ENCODE measurements at regions of chr15 and their contacts with region 1.

Region 1: DNA sequence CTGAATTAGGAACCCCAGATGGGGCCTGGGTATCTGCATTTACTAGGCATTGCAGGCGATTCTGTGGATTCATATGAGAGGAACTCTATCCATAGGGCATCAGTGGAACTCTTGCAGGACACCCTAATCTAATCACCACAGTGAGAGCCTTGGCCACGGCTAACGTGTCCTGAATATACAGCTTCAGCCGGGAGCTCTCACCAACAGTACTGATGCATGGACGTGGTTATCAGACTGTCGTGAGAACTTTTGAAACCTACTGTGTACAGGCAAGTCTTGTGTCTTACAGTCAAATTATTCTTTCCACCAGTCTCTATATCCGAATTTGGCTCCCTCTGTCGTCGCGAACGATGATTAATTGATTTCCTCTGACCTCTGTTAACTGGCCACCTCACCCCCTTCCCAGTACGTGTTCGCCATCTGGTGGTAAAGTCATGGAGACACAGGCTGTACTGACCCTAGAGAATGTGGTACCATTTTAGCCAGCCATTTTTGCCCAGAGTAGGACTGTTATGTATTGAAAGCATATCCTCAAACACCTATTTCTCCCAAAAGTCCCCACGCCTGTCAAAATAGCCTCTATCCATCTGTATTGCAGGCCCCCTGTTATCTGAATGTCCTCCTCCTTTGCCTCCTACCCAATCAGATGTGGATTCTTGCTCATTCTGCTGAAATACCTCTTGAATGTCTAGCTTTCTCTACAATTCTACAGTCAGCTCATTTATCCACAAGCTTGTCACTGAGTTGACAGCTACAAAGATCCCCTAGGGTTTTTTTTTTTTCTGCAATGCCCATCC is 39.7 kb downstream of the GLDN start:
- DNase-seq: peak; percentile 67
- H3K4me3 ChIP-seq: no peak overlapping the region
- H3K27ac ChIP-seq: no peak overlapping the region
- H3K4me1 ChIP-seq: no peaks in the 10 kb centered on the region
- H3K27me3 ChIP-seq: peaks cover 40 to 59% of the 10 kb centered on the region in 2 experiments
- CTCF ChIP-seq: peak; percentile 82 to 87
- POLR2A ChIP-seq: no peak

Region 2: GRCh38 chr15:51132384-51133139 is 248.6 kb before region 1 on chr15:
- CTCF ChIA-PET with region 1: interaction called, 16 read pairs
- POLR2A ChIA-PET with region 1: no interaction called
- dilution Hi-C with region 1: no loop called
- intact Hi-C with region 1: no loop called
- DNase-seq: peak; percentile 97
- H3K4me3 ChIP-seq: no peak overlapping the region
- H3K27ac ChIP-seq: peak overlapping the region; percentile 91
- H3K4me1 ChIP-seq: peaks cover 26% of the 10 kb centered on the region
- H3K27me3 ChIP-seq: no peaks in the 10 kb centered on the region
- CTCF ChIP-seq: peak; percentile 95 to 99
- POLR2A ChIP-seq: peak; percentile 33

Region 3: DNA sequence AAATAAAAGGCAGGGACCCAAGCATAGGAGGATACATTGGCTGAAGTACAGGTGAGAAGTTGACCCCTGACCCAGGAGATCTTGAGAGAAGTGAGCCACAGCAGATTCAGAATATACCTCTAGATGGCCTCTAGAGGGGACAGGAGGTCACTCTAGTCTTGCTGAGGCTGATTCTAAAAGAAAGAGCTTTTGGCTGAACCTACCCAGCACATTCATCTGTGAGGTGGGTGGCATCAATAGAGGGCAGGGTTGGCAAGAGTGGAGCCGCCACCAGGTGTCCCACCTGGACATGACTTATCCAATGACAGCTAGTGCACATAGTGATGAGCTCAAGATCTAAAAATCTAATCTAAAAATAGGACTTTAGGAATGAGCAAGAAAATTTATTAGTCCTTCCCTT is 94.4 kb before region 1 on chr15:
- CTCF ChIA-PET with region 1: interaction called, 230 read pairs
- POLR2A ChIA-PET with region 1: no interaction called
- dilution Hi-C with region 1: no loop called
- intact Hi-C with region 1: loop called (anchors 1 kb)
- DNase-seq: no peak
- H3K4me3 ChIP-seq: no peak overlapping the region
- H3K27ac ChIP-seq: no peak overlapping the region
- H3K4me1 ChIP-seq: no peaks in the 10 kb centered on the region
- H3K27me3 ChIP-seq: peaks cover 67 to 76% of the 10 kb centered on the region in 2 experiments
- CTCF ChIP-seq: no peak
- POLR2A ChIP-seq: no peak

Region 4: DNA sequence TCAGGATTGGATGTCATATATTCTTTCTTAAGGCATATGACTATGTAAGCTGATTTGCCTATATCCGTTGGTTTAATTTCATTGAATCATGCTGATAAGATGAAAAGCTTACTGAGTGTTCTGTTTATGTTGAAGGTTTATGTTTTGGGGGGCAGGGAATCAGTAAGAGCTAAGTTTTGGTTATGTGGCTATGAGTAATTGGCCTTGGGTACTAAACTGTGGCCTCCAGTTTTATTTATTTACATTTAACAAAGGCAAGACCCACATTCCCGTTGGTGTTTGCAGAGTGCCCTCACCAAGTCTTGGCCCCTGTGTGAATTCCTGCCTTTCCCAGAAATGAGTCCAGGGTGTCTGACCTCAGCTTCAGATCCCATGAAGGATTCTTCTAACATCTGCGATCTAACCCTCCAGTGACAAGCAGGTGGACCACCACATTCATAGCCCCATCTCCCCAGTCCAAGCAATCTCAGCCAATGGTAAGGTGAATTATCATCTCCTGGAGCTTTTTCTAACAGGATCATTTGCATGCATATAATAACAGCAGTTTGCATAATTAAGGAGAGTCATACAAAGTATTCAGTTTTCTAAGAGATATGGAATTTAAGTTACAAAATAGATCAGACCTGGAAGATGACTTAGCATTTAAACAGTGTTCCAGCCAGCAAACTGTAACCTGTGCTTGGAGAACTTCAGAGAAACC is 12.3 kb before region 1 on chr15:
- CTCF ChIA-PET with region 1: interaction called, 18 read pairs
- POLR2A ChIA-PET with region 1: no interaction called
- dilution Hi-C with region 1: no loop called
- intact Hi-C with region 1: no loop called
- DNase-seq: no peak
- H3K4me3 ChIP-seq: no peak overlapping the region
- H3K27ac ChIP-seq: no peak overlapping the region
- H3K4me1 ChIP-seq: no peaks in the 10 kb centered on the region
- H3K27me3 ChIP-seq: peaks cover 68 to 69% of the 10 kb centered on the region in 2 experiments
- CTCF ChIP-seq: no peak
- POLR2A ChIP-seq: no peak

Region 5: DNA sequence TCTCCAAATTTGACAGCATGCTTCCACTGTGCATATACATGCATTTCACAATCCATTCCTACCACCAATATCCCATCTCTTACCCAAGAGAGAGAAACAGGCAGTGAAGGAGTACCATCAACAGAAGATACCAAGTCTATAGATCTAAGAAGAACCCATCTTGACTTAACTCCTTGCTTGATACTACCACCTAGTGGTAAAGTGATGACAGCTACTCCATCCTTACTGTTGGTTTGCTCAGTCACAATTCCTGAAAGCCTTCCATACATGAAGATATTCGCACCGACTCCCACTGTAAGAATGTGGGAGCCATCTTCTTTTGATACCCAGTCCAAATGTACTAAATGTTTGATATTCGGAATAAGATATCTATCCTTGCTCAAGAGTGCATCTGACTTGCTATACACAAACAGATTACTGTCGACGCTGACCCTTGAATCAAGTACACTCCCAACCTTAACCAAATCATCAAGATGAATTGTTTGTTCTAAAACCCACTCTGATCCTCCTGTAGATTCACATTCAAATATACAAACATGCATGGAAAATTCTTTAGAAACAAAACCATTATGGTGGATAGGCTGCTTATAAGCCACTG is 118.3 kb after region 1 on chr15:
- CTCF ChIA-PET with region 1: interaction called, 26 read pairs
- POLR2A ChIA-PET with region 1: no interaction called
- dilution Hi-C with region 1: no loop called
- intact Hi-C with region 1: loop called (anchors 1 kb)
- DNase-seq: peak; percentile 59
- H3K4me3 ChIP-seq: no peak overlapping the region
- H3K27ac ChIP-seq: no peak overlapping the region
- H3K4me1 ChIP-seq: peaks cover 19% of the 10 kb centered on the region
- H3K27me3 ChIP-seq: no peaks in the 10 kb centered on the region
- CTCF ChIP-seq: peak; percentile 61 to 66
- POLR2A ChIP-seq: no peak